ENCODE measurements at regions of chr1 and their contacts with region 1.

Region 1: GRCh38 chr1:88180449-88181108 is 503.5 kb upstream of the PKN2 start:
- DNase-seq: peak; percentile 71
- H3K4me3 ChIP-seq: no peak overlapping the region
- H3K27ac ChIP-seq: no peak overlapping the region
- H3K4me1 ChIP-seq: no peaks in the 10 kb centered on the region
- H3K27me3 ChIP-seq: no peaks in the 10 kb centered on the region
- CTCF ChIP-seq: peak; percentile 27 to 77 (median 60)
- EP300 ChIP-seq: no peak
- POLR2A ChIP-seq: no peak

Region 2: DNA sequence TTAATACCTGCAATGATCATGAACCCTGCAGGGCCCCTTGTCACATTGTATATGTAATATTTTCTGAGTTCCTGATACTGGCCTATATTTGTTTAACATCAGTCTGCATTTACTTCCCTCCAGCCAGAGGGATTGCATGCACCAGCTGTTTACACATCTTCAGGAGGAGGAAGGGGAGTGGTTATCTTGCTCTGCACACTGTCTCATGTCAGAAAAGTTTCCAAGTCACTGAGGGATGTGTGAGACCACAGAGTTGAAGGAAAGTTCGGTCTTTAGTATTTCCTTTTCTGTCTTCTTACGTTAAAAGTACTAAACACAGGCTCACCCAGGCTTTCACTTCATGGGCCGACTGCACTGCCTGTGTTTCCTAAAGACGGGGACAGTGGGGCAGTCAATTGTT is 277.7 kb before region 1 on chr1:
- intact Hi-C with region 1: no loop called
- DNase-seq: peak; percentile 66
- H3K4me3 ChIP-seq: peak overlapping the region in 1 of 4 donors; percentile 6
- H3K27ac ChIP-seq: peak overlapping the region in 3 of 4 donors; percentile 57 to 75 (median 58)
- H3K4me1 ChIP-seq: peaks cover 0 to 59% (median 54%) of the 10 kb centered on the region in 4 donors
- H3K27me3 ChIP-seq: no peaks in the 10 kb centered on the region
- CTCF ChIP-seq: no peak
- EP300 ChIP-seq: peak in 1 of 4 donors; percentile 34
- POLR2A ChIP-seq: no peak

Region 3: GRCh38 chr1:88302843-88303486 is 122.4 kb after region 1 on chr1:
- intact Hi-C with region 1: loop called (anchors 5 kb)
- DNase-seq: no peak
- H3K4me3 ChIP-seq: no peak overlapping the region
- H3K27ac ChIP-seq: no peak overlapping the region
- H3K4me1 ChIP-seq: no peaks in the 10 kb centered on the region
- H3K27me3 ChIP-seq: no peaks in the 10 kb centered on the region
- CTCF ChIP-seq: peak in 3 of 4 experiments; percentile 10 to 46 (median 38)
- EP300 ChIP-seq: no peak
- POLR2A ChIP-seq: no peak

Measured in sigmoid colon (tissue), 7 donors.